MCF 10A (cell line): ENCODE measurements at regions of chr10 and their contacts with region 1.

Region 1: GRCh38 chr10:69179743-69180524 is at the start of gene SUPV3L1:
- DNase-seq: peak; percentile 97
- H3K4me3 Mint-ChIP-seq: peak within 1 kb of the TSS; percentile 92
- H3K27ac Mint-ChIP-seq: peak within 1 kb of the TSS; percentile 100
- H3K4me1 Mint-ChIP-seq: peaks cover 33% of the 10 kb centered on the region
- H3K27me3 Mint-ChIP-seq: no peaks in the 10 kb centered on the region
- CTCF ChIP-seq: no peak
- total RNA-seq, gene SUPV3L1: 65.1 and 73.6 TPM in 2 replicates

Region 2: GRCh38 chr10:69222157-69223027 is 42.5 kb after region 1 on chr10:
- CTCF ChIA-PET with region 1: interaction called, 3 read pairs
- POLR2A ChIA-PET with region 1: interaction called, 7 read pairs
- intact Hi-C with region 1: loop called (anchors 2 kb)
- DNase-seq: peak; percentile 96
- H3K4me3 Mint-ChIP-seq: peak overlapping the region; percentile 40
- H3K27ac Mint-ChIP-seq: peak overlapping the region; percentile 88
- H3K4me1 Mint-ChIP-seq: peaks cover 28% of the 10 kb centered on the region
- H3K27me3 Mint-ChIP-seq: no peaks in the 10 kb centered on the region
- CTCF ChIP-seq: peak; percentile 76